Common myeloid progenitor, CD34-positive (primary cell): ENCODE measurements at regions of chr14 and their contacts with region 1.

Region 1: DNA sequence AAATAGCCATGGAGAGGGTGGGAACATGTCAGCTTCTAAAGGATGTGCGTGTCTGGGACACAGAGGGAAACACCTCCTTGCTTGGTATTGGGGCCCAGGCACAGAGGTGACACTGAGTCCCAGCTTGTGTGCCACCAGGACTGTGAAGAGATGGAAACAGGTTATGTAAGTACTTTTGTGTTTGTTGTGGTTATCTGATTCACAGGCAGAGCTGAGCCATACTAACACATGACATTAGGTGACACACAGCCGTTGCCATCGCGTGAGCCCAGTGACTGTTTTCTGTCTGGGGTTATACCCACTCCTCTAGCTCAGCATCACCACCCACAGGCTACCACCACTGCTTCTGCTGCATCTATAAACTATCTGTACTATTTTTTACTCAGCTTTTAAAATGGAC is 12.1 kb upstream of the FLVCR2 start:
- DNase-seq: peak in 2 of 3 donors; percentile 74 to 86
- H3K4me3 ChIP-seq: no peak overlapping the region
- H3K27ac ChIP-seq: no peak overlapping the region
- H3K4me1 ChIP-seq: peaks cover 2 to 16% (median 12%) of the 10 kb centered on the region in 4 experiments
- H3K27me3 ChIP-seq: no peaks in the 10 kb centered on the region

Region 2: DNA sequence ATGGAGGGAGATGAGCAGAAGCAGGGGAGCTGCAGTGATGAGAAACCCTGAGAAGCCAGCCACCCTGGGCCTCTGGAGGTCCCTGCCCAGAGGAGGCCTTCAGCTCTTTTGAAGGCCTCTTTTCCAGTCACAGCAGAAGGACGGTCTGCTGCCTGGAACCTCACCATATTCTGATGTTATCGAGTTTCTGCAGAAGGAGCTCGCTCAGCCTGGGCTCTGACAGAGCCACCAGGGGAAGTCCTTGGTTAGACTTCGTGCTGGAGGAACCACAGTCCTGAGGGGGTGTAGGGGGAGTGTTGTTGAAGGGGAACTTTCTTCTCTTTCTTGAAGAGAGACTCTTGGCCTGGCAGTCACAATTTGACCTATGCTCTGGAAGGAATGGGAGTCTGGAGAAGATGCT is 69.1 kb before region 1 on chr14:
- CTCF ChIA-PET with region 1: interaction called, 11 read pairs
- POLR2A ChIA-PET with region 1: no interaction called
- DNase-seq: peak; percentile 68 to 93 (median 92)
- H3K4me3 ChIP-seq: peak overlapping the region in 2 of 7 experiments; percentile 2 to 7
- H3K27ac ChIP-seq: no peak overlapping the region
- H3K4me1 ChIP-seq: peaks cover 8 to 46% (median 34%) of the 10 kb centered on the region in 4 experiments
- H3K27me3 ChIP-seq: no peaks in the 10 kb centered on the region